ENCODE measurements at regions of chr22 and their contacts with region 1.

Region 1: GRCh38 chr22:39532215-39533071 is at the start of gene RPS19BP1:
- DNase-seq: peak; percentile 100
- H3K4me3 ChIP-seq: peak within 1 kb of the TSS; percentile 97
- H3K27ac ChIP-seq: peak within 1 kb of the TSS; percentile 66
- H3K4me1 ChIP-seq: peaks cover 57% of the 10 kb centered on the region
- CTCF ChIP-seq: no peak
- total RNA-seq, gene RPS19BP1: 148 and 185 TPM in 2 replicates

Region 2: DNA sequence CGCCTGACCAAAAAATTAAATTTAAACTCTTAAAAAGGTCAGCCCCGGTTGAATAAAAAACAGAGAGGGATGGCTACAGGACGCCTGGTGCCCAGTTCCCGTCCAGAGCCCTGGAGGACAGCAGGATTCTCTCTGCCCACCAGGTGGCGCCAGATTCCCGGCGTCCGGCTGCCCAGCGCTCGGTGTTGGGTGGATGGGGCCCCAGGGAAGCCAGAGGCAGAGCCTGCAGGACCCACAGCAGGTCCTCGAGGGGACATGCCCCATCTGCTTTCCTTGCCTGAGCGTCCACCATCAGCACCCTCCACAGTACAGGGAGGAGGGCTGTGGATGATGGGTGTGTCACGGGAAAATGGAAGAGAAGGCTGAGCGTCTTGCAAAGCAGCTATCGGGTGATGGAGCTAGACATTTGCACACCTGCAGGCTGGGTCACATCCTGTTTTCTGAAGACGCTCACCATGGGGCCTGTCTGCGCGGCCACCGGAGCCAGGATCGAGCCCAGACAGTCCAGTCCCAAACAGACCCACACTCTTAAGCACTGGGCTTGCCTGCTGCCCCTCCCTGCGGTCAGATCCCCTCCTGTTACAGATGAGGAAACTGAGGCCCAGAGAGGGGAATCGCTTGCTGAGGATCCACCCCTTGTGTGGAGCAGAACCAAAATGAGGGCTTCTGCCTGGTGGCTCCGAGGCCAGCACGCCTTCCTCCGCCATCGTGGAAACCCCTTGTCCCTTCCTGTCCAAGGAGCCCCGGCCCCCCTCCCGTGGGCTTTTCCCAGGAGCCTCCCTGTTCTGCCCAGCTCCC is 361.4 kb before region 1 on chr22:
- CTCF ChIA-PET with region 1: interaction called, 4 read pairs
- POLR2A ChIA-PET with region 1: no interaction called
- intact Hi-C with region 1: loop called (anchors 2 kb)
- DNase-seq: peak; percentile 91
- H3K4me3 ChIP-seq: peak overlapping the region; percentile 48
- H3K27ac ChIP-seq: peak overlapping the region; percentile 91
- H3K4me1 ChIP-seq: peaks cover 67% of the 10 kb centered on the region
- CTCF ChIP-seq: peak; percentile 97

Region 3: DNA sequence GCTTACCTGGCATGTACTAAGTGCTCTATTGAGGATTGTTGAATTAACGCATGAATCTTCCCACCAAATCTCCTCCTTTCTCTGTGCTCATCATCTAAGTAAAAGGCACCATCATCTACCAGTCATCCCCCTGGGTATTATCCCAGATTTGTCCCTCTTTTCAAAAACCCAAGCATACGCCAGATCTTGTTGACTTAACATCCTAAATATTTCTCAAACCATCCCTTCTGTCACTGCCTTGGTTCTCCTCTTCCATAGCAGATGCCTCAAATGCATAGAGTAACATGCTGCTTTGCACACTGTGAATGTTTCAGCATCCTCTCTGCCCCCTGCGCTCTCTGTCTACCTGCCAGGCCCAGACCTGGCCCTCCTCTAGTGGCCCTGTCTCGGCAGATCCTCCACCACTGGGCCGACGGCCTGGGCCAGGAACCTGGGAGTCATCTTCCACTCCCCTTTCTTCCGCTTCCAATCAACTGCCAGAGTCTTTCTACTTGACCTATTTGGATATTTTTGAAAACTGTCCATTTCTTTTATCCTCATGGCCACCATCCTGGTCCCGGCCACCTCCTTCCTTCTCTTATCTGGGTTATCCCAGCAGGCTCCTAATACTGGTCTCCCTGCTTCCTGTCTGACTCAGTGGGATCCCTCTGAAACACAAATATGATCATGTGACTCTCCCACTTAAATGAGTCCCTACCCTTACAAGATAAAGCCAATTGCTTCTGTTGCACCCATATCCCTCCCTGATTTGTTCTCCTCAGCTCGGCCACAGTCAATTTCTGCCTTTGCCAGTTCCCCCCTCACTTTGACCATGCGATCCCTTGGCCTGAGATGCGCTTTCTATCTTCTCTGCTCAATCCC is 136.3 kb before region 1 on chr22:
- CTCF ChIA-PET with region 1: no interaction called
- POLR2A ChIA-PET with region 1: no interaction called
- intact Hi-C with region 1: loop called (anchors 5 kb)
- DNase-seq: no peak
- H3K4me3 ChIP-seq: no peak overlapping the region
- H3K27ac ChIP-seq: no peak overlapping the region
- H3K4me1 ChIP-seq: peaks cover 13% of the 10 kb centered on the region
- CTCF ChIP-seq: no peak

Region 4: GRCh38 chr22:39520054-39520891 is 12.2 kb before region 1 on chr22 and contains the start of gene ATF4:
- CTCF ChIA-PET with region 1: interaction called, 7 read pairs
- POLR2A ChIA-PET with region 1: interaction called, 15 read pairs
- intact Hi-C with region 1: no loop called
- DNase-seq: peak; percentile 99
- H3K4me3 ChIP-seq: peak within 1 kb of the TSS; percentile 85
- H3K27ac ChIP-seq: peak within 1 kb of the TSS; percentile 89
- H3K4me1 ChIP-seq: peaks cover 56% of the 10 kb centered on the region
- CTCF ChIP-seq: no peak
- total RNA-seq, gene ATF4: 716 and 720 TPM in 2 replicates

Region 5: DNA sequence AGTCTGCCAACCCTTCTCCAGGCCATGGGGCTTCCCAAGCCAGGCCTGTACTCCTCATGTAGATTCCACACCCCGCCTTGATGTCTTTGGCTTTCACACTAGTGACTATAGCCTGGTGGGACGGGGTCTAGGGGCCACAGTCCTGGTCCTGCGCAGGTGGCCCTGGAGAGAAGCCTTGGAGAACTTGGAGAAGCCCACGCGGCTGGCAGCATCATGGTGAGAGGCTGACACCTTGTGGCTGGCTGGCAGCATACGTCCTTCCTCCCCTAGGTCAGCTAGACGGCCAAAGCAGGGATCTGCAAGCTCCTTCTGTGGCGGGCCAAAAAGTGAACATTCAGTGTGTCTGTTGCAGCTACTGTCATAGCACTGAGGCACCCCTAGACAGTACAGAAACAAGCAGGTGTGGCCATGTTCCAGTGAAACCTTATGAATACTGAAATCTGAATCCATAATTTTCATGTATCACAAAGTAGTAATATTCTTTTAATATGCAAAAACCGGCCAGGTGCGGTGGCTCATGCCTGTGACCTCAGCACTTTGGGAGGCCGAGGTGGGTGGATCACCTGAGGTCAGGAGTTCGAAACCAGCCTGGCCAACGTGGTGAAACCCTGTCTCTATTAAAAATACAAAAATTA is 504.3 kb after region 1 on chr22:
- CTCF ChIA-PET with region 1: no interaction called
- POLR2A ChIA-PET with region 1: no interaction called
- intact Hi-C with region 1: loop called (anchors 1 kb)
- DNase-seq: peak; percentile 85
- H3K4me3 ChIP-seq: no peak overlapping the region
- H3K27ac ChIP-seq: no peak overlapping the region
- H3K4me1 ChIP-seq: peaks cover 3% of the 10 kb centered on the region
- CTCF ChIP-seq: peak; percentile 92

Measured in OCI-LY7 (cell line).